ENCODE measurements at regions of chr2 and their contacts with region 1.

Region 1: GRCh38 chr2:32627814-32628579 is at the start of gene TTC27:
- DNase-seq: peak; percentile 97
- ATAC-seq: peak; percentile 99
- H3K4me3 Mint-ChIP-seq: peak within 1 kb of the TSS; percentile 92
- H3K27ac Mint-ChIP-seq: peak within 1 kb of the TSS; percentile 93
- H3K4me1 Mint-ChIP-seq: peaks cover 34% of the 10 kb centered on the region
- H3K27me3 Mint-ChIP-seq: no peaks in the 10 kb centered on the region
- total RNA-seq, gene TTC27: 32.7 to 33.7 TPM

Region 2: GRCh38 chr2:32063310-32064161 is 564.5 kb before region 1 on chr2 and contains the start of gene SPAST:
- CTCF ChIA-PET with region 1: no interaction called
- POLR2A ChIA-PET with region 1: no interaction called
- intact Hi-C with region 1: loop called in 1 of 2 experiments (anchors 1 kb)
- DNase-seq: peak; percentile 98
- ATAC-seq: peak; percentile 95
- H3K4me3 Mint-ChIP-seq: peak within 1 kb of the TSS; percentile 97
- H3K27ac Mint-ChIP-seq: peak within 1 kb of the TSS; percentile 94
- H3K4me1 Mint-ChIP-seq: peaks cover 23% of the 10 kb centered on the region
- H3K27me3 Mint-ChIP-seq: no peaks in the 10 kb centered on the region
- total RNA-seq, gene SPAST: 16.8 to 19.5 TPM

Region 3: DNA sequence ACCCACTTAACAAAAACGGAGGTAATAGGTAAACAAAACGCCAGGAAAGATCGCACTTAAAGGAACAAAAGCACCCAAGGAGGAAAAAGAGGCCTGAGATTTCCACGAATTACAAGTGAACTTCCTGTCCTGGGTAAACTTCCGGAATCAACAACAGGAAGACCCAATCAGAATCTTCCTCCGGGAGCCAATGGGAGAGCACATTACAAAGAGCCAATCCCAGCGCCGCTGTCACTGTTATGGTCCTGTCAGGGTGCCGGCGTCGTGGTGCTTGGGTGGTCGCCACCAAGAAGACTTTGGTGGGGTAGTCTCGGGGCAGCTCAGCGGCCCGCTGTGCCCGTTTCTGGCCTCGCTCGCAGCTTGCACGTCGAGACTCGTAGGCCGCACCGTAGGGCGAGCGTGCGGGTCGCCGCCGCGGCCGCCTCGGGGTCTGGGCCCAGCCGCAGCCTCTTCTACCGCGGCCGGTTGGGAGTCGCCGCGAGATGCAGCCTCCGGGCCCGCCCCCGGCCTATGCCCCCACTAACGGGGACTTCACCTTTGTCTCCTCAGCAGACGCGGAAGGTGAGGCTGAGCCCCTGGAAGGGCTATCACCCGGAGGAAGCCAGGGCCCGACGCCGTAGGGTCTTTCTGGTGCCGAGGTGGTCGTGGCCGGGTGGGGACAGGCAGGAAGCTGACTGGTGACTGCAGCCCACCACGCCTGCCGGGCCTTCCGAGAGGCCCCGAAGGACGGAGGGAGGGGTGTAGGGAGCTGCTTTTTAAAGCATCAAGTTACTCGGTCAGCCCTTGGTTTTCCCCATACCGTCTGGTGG is 350.1 kb before region 1 on chr2 and contains the start of gene YIPF4:
- CTCF ChIA-PET with region 1: no interaction called
- POLR2A ChIA-PET with region 1: no interaction called
- intact Hi-C with region 1: loop called in 1 of 2 experiments (anchors 1 kb)
- DNase-seq: peak; percentile 89
- ATAC-seq: peak; percentile 99
- H3K4me3 Mint-ChIP-seq: peak within 1 kb of the TSS; percentile 94
- H3K27ac Mint-ChIP-seq: peak within 1 kb of the TSS; percentile 93
- H3K4me1 Mint-ChIP-seq: peaks cover 24% of the 10 kb centered on the region
- H3K27me3 Mint-ChIP-seq: no peaks in the 10 kb centered on the region
- total RNA-seq, gene YIPF4: 17.5 to 37.6 TPM

Region 4: GRCh38 chr2:32553829-32554432 is 74.1 kb before region 1 on chr2:
- CTCF ChIA-PET with region 1: no interaction called
- POLR2A ChIA-PET with region 1: no interaction called
- intact Hi-C with region 1: loop called in 1 of 2 experiments (anchors 5 kb)
- DNase-seq: no peak
- ATAC-seq: peak; percentile 63
- H3K4me3 Mint-ChIP-seq: no peak overlapping the region
- H3K27ac Mint-ChIP-seq: no peak overlapping the region
- H3K4me1 Mint-ChIP-seq: no peaks in the 10 kb centered on the region
- H3K27me3 Mint-ChIP-seq: no peaks in the 10 kb centered on the region

Region 5: DNA sequence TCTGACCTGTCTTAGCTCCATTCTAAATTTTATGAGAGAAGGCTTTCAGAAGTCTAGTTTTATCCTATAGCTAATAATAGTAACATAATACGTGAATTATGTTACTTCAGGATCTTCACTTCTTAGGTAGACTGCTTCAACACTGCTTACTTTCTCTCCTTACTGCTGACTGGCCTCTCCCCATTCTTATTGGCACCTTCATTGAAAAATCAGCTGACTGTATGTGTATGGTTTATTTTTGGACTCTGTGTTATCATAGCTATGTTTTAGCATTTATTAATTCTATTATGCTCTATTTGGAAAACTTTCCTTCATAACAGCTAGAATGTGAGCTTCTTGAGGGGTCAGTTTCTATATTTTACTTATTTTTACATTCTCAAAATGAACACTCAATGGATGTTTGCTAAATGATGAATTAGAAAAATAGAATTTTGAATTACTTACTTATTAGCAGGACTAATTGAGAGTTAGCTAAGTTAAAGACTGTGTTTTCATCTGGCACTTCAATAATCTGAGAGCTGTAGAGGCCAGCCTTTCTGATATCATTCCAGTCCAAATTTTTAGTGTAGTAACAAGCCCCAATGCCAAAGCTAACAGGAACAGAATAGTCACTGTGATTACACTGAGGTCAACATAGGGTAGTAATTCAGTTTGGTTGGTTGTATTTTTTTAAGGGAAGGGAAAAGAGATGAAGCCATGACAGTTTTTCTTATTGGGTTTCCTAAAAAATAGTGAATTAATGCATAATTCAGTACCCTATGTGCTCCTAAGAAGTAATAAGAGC is 92.1 kb after region 1 on chr2:
- CTCF ChIA-PET with region 1: no interaction called
- POLR2A ChIA-PET with region 1: no interaction called
- intact Hi-C with region 1: no loop called
- DNase-seq: no peak
- ATAC-seq: no peak
- H3K4me3 Mint-ChIP-seq: no peak overlapping the region
- H3K27ac Mint-ChIP-seq: no peak overlapping the region
- H3K4me1 Mint-ChIP-seq: peaks cover 8% of the 10 kb centered on the region
- H3K27me3 Mint-ChIP-seq: no peaks in the 10 kb centered on the region

Region 6: DNA sequence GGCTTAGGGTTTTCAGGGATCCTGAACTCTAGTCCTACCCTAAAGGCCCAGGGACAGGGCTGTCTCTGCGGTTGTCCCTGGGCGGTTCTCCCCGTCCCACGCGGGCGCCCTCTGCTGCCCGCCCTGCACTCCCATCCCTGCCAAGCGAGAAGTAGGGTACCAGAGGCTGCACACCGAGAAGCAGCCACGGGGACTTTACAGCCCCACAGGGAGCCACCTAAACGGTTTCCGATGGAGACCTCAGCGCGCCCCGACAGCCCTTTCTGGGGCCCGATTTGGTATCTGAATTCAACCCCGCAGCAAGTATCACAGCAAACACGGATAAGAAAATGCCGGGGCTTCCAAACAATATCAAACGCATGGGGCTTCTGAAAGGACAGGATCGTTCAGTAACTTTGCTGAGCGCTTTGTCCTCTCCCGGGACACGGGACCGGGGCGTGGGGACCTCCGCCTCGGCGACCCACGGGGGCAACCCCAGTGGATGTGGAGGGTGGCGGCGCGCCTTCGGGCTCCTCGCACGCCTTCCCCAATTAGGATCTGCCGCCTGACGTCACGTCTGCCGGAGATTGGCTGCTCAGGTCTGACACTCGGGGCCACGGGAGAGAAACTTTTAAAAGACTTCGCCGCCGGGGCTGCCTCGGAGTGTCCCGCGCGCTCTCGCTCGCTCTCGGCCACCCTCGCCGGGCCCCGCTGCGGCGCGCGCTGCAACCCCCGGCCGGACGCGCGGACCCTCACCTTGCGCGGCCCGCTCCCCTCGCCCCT is 318.5 kb after region 1 on chr2 and contains the start of gene LTBP1:
- CTCF ChIA-PET with region 1: no interaction called
- POLR2A ChIA-PET with region 1: no interaction called
- intact Hi-C with region 1: loop called in 1 of 2 experiments (anchors 2 kb)
- DNase-seq: peak; percentile 78
- ATAC-seq: peak; percentile 81
- H3K4me3 Mint-ChIP-seq: peak within 1 kb of the TSS; percentile 67
- H3K27ac Mint-ChIP-seq: no peak within 1 kb of the TSS
- H3K4me1 Mint-ChIP-seq: no peaks in the 10 kb centered on the region
- H3K27me3 Mint-ChIP-seq: peaks cover 23% of the 10 kb centered on the region
- total RNA-seq, gene LTBP1: 0.14 to 0.26 TPM

Region 7: GRCh38 chr2:33599175-33599942 is 971.4 kb after region 1 on chr2 and contains the start of gene FAM98A:
- CTCF ChIA-PET with region 1: no interaction called
- POLR2A ChIA-PET with region 1: no interaction called
- intact Hi-C with region 1: loop called (anchors 1 to 2 kb)
- DNase-seq: peak; percentile 99
- ATAC-seq: peak; percentile 91
- H3K4me3 Mint-ChIP-seq: peak within 1 kb of the TSS; percentile 88
- H3K27ac Mint-ChIP-seq: peak within 1 kb of the TSS; percentile 93
- H3K4me1 Mint-ChIP-seq: peaks cover 24% of the 10 kb centered on the region
- H3K27me3 Mint-ChIP-seq: no peaks in the 10 kb centered on the region
- total RNA-seq, gene FAM98A: 42.9 to 61.5 TPM

Measured in activated CD4-positive, alpha-beta T cell treated with anti-CD3 and anti-CD28 coated beads for 36 hours (primary cell).